Posterior vena cava (tissue), 2 donors: ENCODE measurements at regions of chr1 and their contacts with region 1.

Region 1: DNA sequence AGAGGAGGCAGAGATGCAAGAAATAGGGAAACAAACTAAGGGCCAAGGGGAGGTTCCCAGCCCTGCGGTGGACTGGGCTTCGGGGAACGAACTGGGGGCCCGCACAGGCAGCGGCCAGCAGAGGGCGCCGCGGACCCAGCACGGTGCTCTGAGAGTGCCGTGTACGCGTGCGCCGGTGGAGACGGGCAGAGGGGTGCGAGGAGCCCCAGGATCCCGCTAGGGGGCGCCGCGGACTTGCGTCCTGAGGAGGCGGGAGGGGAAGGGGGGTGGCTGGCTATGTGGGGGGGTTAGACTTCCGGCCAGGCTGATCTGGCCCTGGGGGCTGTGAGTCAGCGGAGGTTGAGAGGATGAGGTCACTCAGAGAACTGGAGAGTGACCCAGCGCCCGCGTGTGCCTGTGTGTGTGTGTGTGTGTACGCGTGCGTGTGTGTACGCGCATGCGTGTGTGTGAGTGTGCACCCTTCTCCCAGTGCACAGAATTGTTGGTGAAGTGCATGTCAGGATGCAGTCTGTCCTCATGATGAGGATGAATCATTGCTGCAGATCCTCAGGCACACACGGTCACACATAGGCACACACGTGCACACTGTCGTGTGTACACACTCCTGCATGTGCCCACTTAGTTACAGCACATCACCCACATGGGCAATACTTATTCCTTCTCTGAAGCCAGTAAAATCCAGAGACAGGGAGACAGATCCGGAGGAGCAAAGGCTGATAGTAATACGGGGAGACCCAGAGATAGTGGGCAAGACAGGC is 17.0 kb downstream of the NES start:
- DNase-seq: peak; percentile 99

Region 2: GRCh38 chr1:156233426-156234127 is 426.6 kb before region 1 on chr1:
- intact Hi-C with region 1: no loop called
- DNase-seq: no peak

Region 3: GRCh38 chr1:156583821-156584622 is 76.2 kb before region 1 on chr1:
- intact Hi-C with region 1: loop called in 1 of 2 experiments (anchors 5 kb)
- DNase-seq: no peak

Region 4: DNA sequence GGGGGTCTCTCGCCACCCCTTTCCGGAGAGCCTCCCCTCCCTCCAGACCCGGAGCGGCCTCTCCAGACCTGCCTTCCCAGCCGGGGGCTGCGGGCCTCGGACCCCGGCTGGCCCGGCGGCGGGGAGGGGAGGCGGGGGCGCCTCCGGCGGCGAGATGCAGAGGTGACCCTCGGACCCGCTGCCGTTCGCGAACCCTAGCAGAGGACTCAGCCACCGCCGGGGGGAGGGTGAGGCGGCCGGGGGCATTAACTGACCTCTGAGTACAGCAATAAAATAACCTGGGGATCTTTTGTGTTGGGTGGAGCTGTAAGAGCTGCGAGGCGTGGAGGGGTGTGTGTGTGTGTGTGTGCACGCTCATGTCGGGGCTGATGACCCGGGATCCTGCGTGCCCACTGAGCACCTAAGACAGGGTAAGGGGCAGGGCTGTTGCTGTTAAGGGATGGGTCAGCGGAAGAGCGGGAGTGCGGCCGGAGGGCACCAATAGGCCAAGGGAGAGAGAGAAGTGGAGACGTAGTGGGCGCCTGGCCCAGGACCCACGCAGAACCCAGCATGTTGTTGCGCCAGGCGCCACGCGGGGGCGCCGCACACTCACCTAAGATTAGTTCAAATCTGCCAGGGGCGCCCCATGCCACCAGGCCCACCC is 34.6 kb before region 1 on chr1:
- intact Hi-C with region 1: loop called in 1 of 2 experiments (anchors 2 kb)
- DNase-seq: peak; percentile 84

Region 5: DNA sequence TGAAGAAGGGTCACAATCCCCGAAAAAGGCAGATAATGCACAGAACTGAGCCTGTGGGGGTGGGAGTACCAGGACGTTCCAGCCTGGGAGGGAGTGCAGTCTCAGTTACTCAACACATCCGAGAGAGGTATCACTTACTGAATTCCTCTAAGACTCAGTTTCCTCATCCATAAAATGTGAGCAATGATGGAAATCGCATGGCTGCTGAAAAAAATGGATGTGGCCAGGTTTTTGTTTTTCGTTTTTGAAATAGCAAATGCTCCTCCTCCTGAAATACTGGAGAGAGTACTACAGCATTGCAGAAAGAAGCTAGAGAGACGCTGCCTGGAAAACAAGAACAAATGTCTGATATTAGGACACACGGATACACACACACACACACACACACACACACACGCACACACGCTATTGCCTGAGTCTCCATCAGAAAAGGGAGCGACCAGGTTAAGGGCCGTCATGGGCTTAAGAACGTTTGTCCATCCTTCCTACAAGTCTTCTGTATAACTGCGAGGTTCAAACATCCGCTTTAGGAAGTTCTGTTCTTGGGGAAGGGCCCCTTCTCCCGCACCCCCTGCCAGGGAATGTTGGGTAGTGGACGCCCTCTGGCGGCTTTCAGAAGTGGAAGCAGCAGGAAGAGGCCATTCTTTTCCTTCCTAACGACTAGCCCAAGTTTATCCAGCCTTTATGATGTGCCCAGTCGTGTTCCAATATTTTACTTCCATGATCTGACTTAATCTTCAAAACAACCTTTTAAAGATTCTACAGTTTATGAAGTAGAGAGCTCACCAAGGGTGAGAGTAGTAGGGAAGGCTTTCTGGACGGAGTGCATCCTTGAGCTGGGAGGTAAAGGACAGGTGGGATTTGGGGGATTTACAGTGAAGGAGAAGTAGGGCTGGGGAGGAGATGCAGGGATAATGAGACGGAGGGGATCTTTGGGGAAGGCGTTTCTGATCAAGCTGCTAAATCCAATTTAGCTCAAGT is 17.7 kb after region 1 on chr1:
- intact Hi-C with region 1: loop called (anchors 1 to 2 kb)
- DNase-seq: peak; percentile 87

Region 6: DNA sequence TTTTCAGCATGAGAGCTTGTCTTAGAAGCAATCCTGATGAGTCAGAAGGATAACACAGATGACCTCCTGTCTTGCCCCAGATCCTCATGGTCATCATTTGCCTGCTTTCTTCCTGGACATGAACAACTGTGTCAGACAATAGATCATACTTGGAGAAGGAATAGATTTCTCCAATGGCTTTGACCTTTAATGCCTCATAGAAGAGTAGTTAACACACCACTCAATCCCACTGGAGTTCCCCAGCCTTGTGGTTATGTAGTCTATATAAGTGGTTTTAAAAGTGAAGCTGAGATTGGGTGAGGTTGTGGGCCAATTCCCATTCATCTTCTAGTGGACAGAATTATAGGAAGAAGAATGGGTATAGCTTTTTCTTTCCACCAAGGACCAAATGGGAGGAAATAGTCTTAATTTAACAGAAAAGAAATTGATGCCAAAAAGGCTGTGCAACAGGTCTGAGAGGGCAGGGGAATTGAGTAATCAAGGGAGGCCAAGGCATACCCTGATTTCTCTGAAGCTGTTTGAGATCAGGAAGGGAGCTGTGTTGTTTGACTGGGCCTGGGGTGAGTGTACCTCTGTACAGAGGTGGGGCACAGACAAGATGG is 121.5 kb after region 1 on chr1:
- intact Hi-C with region 1: no loop called
- DNase-seq: no peak

Region 7: DNA sequence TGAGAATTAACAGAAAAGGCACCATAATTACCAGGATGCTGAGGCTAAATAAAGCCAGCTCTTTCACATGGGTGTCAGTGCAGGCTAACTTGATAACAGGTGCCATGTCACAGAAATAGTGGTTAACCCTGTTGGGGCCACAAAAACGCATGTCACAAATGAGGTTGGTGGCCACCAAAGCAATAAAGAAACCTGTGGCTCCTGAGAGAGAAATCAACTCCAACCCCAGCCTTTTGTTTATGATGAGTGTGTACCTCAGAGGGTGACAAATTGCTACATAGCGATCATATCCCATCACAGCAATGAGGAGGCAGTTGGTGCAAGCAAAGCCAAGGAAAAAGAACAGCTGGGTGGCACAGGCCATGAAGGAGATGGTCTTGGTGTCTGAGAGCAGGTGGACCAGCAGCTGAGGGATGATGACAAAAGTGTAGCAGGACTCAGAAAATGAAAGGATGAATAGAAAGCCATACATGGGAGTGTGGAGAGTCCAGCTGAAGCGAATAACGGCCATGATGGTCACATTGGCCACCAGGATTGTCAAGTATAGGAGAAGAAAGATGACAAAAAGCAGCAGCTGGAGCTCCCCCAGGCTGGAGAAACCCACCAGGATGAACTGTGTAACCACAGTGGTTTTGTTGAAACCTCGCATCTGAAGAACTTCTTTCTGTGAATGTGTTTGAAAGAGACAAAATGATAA is 1738.8 kb after region 1 on chr1 and contains the start of gene OR10T2:
- intact Hi-C with region 1: no loop called
- DNase-seq: no peak
- total RNA-seq, gene OR10T2: not detected